Esophagus squamous epithelium (tissue), 5 donors: ENCODE measurements at regions of chr5 and their contacts with region 1.

Region 1: DNA sequence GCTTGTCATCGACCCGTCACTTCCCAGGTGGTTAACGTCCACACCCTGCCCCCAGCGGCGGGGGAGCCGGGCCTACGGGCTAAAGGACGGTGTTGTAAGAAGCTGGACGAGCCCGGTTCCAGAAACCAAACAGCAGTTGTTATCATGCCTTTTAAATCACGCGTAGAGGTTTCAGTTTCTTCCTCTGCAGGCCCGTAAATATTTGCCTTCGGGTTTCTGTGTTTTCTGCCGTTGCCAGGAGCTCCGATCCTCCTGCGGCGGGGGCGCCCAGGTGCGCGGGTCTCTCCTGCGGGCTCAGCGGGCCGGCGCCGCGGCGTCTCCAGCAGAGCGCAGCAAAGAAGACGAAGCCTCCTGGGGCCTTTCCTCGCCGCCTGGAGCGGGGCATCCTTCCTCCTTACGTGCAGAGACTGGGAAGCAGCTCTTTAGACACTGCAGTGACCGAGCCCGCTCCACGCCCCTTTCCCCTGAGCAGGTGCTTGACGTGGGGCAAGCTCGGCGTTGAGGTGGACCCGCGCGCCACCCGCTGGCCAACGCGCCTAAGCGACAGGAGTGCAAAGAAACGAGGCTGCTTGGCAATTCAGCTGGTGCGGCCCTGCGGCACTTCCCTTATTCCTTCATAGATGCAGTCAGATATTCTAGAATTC is 21.8 kb upstream of the TTC1 start:
- DNase-seq: peak; percentile 15
- H3K4me3 ChIP-seq: peak overlapping the region; percentile 22 to 67 (median 36)
- H3K27ac ChIP-seq: no peak overlapping the region
- H3K4me1 ChIP-seq: peaks cover 0 to 12% (median 6%) of the 10 kb centered on the region in 3 donors
- H3K27me3 ChIP-seq: peaks cover 0 to 56% (median 2%) of the 10 kb centered on the region in 4 donors
- CTCF ChIP-seq: peak; percentile 62 to 86 (median 76)
- POLR2A ChIP-seq: no peak

Region 2: GRCh38 chr5:159444441-159445082 is 542.6 kb before region 1 on chr5:
- intact Hi-C with region 1: loop called (anchors 10 kb)
- DNase-seq: no peak
- H3K4me3 ChIP-seq: no peak overlapping the region
- H3K27ac ChIP-seq: no peak overlapping the region
- H3K4me1 ChIP-seq: peaks cover 0 to 4% (median 0%) of the 10 kb centered on the region in 3 donors
- H3K27me3 ChIP-seq: no peaks in the 10 kb centered on the region
- CTCF ChIP-seq: peak in 4 of 6 experiments; percentile 21 to 52 (median 28)
- POLR2A ChIP-seq: no peak

Region 3: DNA sequence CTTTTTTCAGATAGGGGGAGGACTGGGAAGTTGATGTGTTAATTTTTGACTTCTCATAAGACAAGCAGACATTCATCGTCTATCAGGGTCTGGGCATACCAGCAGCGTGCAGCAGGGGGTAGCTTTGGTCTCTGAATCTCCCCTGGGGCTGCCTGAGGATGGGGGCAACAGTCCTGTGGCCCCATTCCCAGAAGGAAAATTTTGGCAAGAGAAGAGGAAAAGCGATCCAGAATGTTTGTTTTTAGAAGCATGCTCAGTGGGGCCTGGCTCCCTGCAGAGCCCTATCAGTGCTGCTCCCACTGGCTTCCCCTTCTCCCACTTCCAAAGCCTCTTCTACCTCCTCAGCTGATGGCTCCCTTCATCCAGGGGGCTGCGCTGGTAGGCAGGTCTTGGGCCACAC is 462.0 kb before region 1 on chr5:
- intact Hi-C with region 1: loop called (anchors 10 kb)
- DNase-seq: no peak
- H3K4me3 ChIP-seq: no peak overlapping the region
- H3K27ac ChIP-seq: no peak overlapping the region
- H3K4me1 ChIP-seq: no peaks in the 10 kb centered on the region
- H3K27me3 ChIP-seq: no peaks in the 10 kb centered on the region
- CTCF ChIP-seq: no peak
- POLR2A ChIP-seq: no peak